ENCODE measurements at regions of chr1 and their contacts with region 1.

Region 1: GRCh38 chr1:66253330-66253921 is 280.5 kb upstream of the SGIP1 start:
- DNase-seq: no peak
- ATAC-seq: peak; percentile 74
- H3K4me3 Mint-ChIP-seq: no peak overlapping the region
- H3K27ac Mint-ChIP-seq: no peak overlapping the region
- H3K4me1 Mint-ChIP-seq: peaks cover 44% of the 10 kb centered on the region
- H3K27me3 Mint-ChIP-seq: no peaks in the 10 kb centered on the region
- CTCF ChIP-seq: no peak

Region 2: GRCh38 chr1:66154394-66154793 is 99.0 kb before region 1 on chr1:
- CTCF ChIA-PET with region 1: no interaction called
- POLR2A ChIA-PET with region 1: no interaction called
- DNase-seq: no peak
- ATAC-seq: no peak
- H3K4me3 Mint-ChIP-seq: no peak overlapping the region
- H3K27ac Mint-ChIP-seq: no peak overlapping the region
- H3K4me1 Mint-ChIP-seq: peaks cover 7% of the 10 kb centered on the region
- H3K27me3 Mint-ChIP-seq: peaks cover 2% of the 10 kb centered on the region; the same call in 1 of the 2 replicates
- CTCF ChIP-seq: no peak

Region 3: DNA sequence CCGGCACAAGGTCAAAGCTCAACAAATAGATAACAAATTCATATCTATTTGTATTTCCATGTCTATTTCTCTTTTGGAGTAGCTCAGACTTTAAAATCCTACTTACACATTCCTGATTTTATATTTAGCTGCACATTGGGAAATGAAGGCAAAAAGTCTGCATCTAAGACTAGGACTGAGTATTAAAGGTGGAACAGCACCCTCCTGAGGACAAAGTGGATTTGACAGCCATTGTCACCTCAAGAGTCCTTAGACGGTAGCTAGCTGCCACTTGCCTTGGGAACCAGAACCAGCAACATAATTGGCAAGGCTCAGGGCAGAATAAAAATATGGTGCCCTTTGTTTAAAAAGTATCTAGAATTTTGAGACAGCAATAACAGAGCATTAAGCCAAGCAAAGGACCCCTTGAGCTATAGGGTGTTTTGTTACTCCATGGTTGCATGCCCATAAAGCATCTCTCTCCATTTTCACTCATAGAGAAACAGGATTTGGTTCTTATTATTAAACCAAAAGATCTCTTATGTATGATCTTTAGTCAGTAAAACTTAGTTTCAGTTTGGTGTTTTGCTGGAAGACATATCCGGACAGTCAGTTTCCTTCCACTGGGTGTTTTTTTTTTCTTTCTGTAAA is 250.5 kb after region 1 on chr1:
- CTCF ChIA-PET with region 1: interaction called, 14 read pairs
- POLR2A ChIA-PET with region 1: no interaction called
- DNase-seq: peak; percentile 59
- ATAC-seq: peak; percentile 96
- H3K4me3 Mint-ChIP-seq: no peak overlapping the region
- H3K27ac Mint-ChIP-seq: no peak overlapping the region
- H3K4me1 Mint-ChIP-seq: peaks cover 5% of the 10 kb centered on the region; the same call in 1 of the 2 replicates
- H3K27me3 Mint-ChIP-seq: no peaks in the 10 kb centered on the region
- CTCF ChIP-seq: peak; percentile 60

Measured in WTC11 (cell line).